AG04450 (cell line): ENCODE measurements at regions of chr11 and their contacts with region 1.

Region 1: DNA sequence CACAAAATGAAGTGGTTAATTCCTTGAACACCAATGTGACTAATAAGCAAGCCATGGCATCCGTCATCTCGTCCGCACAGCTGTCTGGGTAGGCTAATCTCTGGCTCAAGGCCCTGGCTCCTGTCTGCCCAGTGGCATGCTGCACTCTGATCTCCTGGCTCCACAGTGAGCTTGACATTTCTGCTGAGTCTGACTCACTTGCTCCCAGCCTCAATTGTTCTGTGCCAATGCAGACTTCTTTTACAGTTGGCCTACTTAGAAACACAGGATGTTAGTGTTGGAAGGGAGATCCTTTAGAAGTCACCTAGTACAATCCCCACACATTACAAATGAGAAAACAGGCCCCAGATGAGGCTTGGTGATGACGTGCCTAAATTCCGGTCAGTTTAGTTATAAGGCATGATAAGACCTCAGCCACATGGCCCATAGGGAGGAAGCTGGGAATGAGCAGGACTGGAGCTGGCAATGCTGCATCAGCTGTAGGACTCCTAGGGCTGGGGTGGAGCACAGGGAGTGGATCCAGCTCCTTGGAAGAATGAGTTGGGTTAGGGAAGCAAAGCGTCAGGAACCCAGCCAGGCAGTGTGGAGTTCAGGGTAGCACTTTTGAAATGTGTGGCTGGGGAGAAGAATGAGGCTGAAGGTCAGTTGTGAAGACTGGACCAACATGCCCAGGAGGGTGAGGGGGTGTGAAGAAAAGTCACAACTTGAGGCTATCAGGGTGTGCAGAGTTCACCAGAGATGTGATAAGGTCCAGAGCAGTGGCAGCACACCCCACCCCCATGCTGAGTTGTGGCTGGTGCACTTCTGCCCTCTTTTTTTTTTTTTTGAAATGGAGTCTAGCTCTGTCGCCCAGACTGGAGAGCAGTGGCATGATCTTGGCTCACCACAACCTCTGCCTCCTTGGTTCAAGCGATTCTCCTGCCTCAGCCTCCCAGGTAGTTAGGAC is 70.2 kb upstream of the EED start:
- DNase-seq: peak; percentile 92
- H3K4me3 ChIP-seq: no peak overlapping the region
- H3K27ac ChIP-seq: peak overlapping the region; percentile 97
- H3K27me3 ChIP-seq: no peaks in the 10 kb centered on the region
- CTCF ChIP-seq: no peak

Region 2: DNA sequence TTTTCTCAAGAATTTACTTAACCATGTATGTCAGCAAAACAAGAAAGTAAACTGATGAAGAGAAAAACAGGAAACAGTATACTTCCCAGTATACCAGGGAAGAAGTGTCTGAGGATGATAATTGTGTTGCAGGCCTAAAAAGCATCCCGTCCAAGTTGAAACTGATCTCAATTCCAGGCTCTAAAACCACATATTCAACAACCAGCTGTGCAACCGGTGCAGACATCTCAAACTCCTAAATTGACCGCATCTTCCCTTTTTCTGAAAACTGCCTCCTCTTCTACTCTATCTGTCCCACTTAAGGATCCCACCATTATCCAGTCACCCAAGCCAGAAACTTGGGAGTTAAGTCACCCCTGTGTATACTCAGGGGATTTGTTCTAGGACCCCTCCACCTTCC is 272.0 kb before region 1 on chr11:
- CTCF ChIA-PET with region 1: no interaction called
- POLR2A ChIA-PET with region 1: no interaction called
- DNase-seq: no peak
- H3K4me3 ChIP-seq: no peak overlapping the region
- H3K27ac ChIP-seq: no peak overlapping the region
- H3K27me3 ChIP-seq: no peaks in the 10 kb centered on the region
- CTCF ChIP-seq: no peak

Region 3: GRCh38 chr11:86068951-86069407 is 105.4 kb before region 1 on chr11 and contains the start of gene PICALM:
- CTCF ChIA-PET with region 1: no interaction called
- POLR2A ChIA-PET with region 1: interaction called, 21 read pairs
- DNase-seq: peak; percentile 98
- H3K4me3 ChIP-seq: peak within 1 kb of the TSS; percentile 98
- H3K27ac ChIP-seq: peak within 1 kb of the TSS; percentile 100
- H3K27me3 ChIP-seq: no peaks in the 10 kb centered on the region
- CTCF ChIP-seq: no peak
- polyA plus RNA-seq, gene PICALM: 294 and 303 TPM in 2 replicates

Region 4: DNA sequence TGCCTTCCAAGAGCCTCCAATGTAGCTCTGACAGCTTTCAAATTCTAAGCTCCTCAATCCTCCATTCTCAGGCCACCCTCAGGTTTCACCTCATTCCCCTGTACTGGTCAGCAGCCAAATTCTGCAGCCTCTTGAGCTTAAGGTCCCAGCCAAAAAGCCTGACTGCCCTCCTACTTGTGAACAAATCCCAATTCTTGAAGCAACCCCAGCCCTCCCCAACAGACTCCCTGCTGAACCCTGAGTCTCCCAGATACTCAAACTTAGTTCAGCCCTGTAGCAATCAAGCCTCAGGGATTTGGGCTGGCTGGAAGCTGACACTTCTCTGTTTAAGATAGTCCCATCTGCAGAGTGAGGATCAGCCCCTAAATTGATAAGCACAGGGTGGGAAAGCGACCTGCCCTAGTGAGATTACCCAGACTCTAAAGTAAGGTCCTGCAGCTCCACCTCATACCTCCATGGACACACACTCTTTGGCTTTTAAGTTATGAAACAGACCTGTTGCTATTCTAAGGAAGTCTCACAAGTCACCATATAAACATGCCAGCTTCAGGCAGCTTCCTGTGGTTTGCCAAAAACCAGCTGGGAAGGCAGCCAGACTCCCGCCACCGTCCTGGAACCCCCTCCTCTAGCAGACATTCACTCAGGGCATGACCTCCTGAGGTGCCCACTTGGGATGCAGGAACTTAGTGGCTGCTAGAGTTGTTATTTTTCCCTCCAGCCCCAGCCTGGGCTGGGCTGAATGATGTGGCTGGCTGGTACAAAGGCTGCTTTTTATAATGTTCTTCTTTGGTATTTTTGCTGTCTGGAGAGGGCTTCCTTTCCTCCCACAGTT is 23.0 kb before region 1 on chr11:
- CTCF ChIA-PET with region 1: no interaction called
- POLR2A ChIA-PET with region 1: interaction called, 11 read pairs
- DNase-seq: no peak
- H3K4me3 ChIP-seq: no peak overlapping the region
- H3K27ac ChIP-seq: peak overlapping the region; percentile 41
- H3K27me3 ChIP-seq: no peaks in the 10 kb centered on the region
- CTCF ChIP-seq: no peak

Region 5: DNA sequence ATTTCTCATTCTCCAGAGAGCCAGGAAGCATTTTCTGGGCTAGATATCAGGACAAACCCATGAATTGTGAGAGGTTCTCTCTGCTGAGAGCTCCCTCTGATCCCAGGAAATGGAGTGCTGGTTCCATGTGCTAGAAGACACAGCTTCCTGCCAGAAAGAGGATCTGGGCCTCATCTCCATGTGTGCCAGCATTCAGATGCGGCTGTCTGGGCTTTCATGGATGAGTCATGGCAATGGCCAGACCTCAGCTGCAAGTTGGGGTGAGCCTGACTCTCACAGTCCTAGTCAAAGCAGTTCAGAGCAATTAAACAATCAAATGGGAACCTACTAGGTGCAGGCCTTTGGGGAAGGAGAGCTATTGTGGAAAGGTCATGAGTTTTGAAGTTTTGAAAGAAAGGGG is 12.1 kb before region 1 on chr11:
- CTCF ChIA-PET with region 1: interaction called, 4 read pairs
- POLR2A ChIA-PET with region 1: interaction called, 19 read pairs
- DNase-seq: peak; percentile 58
- H3K4me3 ChIP-seq: no peak overlapping the region
- H3K27ac ChIP-seq: peak overlapping the region; percentile 71
- H3K27me3 ChIP-seq: no peaks in the 10 kb centered on the region
- CTCF ChIP-seq: no peak

Region 6: GRCh38 chr11:86193297-86194095 is 19.1 kb after region 1 on chr11:
- CTCF ChIA-PET with region 1: interaction called, 15 read pairs
- POLR2A ChIA-PET with region 1: no interaction called
- DNase-seq: peak; percentile 47
- H3K4me3 ChIP-seq: no peak overlapping the region
- H3K27ac ChIP-seq: no peak overlapping the region
- H3K27me3 ChIP-seq: no peaks in the 10 kb centered on the region
- CTCF ChIP-seq: peak; percentile 85